Activated T-helper 1 cell treated with anti-CD3 and anti-CD28 coated beads, Interleukin-12 subunit alpha, Interleukin-12 subunit beta, Interleukin-2, Interleukin-4 antibody, amounts not matched to agents 30 ng/mL and 10 ng/mL and 1 ng/mL, durations not matched to agents 14 hours and 24 hours and 36 hours (primary cell): ENCODE measurements at regions of chr5 and their contacts with region 1.

Region 1: GRCh38 chr5:179732417-179732917 is at the start of gene MAML1:
- DNase-seq: peak; percentile 100
- H3K4me3 Mint-ChIP-seq: peak within 1 kb of the TSS; percentile 95
- H3K27ac Mint-ChIP-seq: peak within 1 kb of the TSS; percentile 93
- H3K4me1 Mint-ChIP-seq: peaks cover 26% of the 10 kb centered on the region
- H3K27me3 Mint-ChIP-seq: no peaks in the 10 kb centered on the region
- total RNA-seq, gene MAML1: 36.0 and 37.6 TPM in 2 replicates

Region 2: DNA sequence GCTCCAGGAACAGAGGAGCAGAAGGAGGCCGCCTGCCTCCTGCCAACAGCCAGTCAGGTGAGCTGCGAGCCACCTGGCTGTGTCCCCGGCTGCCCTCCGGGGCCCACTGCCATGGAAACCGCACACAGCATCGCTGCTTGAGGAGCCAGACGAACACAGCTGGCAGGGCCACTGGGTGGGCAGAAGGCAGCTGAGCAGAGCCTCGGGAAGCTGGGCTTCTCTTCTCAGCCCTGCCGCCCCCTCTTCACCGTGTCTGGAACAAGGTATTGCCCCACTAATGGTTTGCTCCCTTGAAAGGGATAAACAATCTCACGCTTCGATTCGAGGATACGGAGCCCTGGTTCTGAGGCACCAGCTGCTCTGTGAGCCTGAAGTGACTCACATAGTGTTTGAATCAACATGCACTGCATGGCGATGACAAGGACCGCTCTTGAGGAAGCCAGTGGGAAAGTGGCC is 245.8 kb before region 1 on chr5:
- intact Hi-C with region 1: no loop called
- DNase-seq: no peak
- H3K4me3 Mint-ChIP-seq: no peak overlapping the region
- H3K27ac Mint-ChIP-seq: no peak overlapping the region
- H3K4me1 Mint-ChIP-seq: no peaks in the 10 kb centered on the region
- H3K27me3 Mint-ChIP-seq: peaks cover 7% of the 10 kb centered on the region

Region 3: GRCh38 chr5:179516221-179516620 is 216.2 kb before region 1 on chr5:
- intact Hi-C with region 1: no loop called
- DNase-seq: no peak
- H3K4me3 Mint-ChIP-seq: no peak overlapping the region
- H3K27ac Mint-ChIP-seq: no peak overlapping the region
- H3K4me1 Mint-ChIP-seq: no peaks in the 10 kb centered on the region
- H3K27me3 Mint-ChIP-seq: peaks cover 4% of the 10 kb centered on the region

Region 4: GRCh38 chr5:179559284-179560252 is 172.9 kb before region 1 on chr5:
- intact Hi-C with region 1: loop called (anchors 1 kb)
- DNase-seq: peak; percentile 93
- H3K4me3 Mint-ChIP-seq: peak overlapping the region; percentile 94
- H3K27ac Mint-ChIP-seq: peak overlapping the region; percentile 86
- H3K4me1 Mint-ChIP-seq: peaks cover 10% of the 10 kb centered on the region
- H3K27me3 Mint-ChIP-seq: no peaks in the 10 kb centered on the region

Region 5: DNA sequence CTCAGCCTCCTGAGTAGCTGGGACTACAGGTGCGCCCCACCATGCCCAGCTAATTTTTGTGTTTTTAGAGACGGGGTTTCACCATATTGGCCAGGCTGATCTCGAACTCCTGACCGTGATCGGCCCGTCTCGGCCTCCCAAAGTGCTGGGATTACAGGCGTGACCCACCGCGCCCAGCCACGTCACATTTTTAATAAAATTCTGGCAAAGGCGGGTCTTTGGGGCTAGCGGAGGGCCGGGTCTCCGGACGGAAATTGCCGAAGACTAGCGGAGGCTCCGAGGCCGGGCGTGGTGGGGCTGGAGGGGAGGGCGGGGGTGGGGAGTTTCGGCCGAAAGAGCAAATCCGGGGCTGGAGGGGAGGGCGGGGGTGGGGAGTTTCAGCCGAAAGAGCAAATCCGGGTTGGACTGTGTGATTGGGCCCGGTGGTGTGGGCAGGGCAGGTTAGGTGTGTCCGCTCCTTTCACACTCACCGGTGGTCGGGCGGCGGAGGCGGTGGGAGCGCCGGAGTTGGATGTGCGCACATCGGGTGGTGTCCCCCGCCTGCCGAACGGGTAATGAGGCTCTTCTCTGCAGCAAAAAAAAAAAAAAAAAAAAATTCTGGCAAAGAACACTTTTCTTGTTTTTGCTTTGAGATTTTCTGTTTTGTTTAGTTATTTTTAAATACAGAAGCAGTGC is 155.0 kb before region 1 on chr5:
- intact Hi-C with region 1: no loop called
- DNase-seq: no peak
- H3K4me3 Mint-ChIP-seq: no peak overlapping the region
- H3K27ac Mint-ChIP-seq: no peak overlapping the region
- H3K4me1 Mint-ChIP-seq: no peaks in the 10 kb centered on the region
- H3K27me3 Mint-ChIP-seq: no peaks in the 10 kb centered on the region

Region 6: GRCh38 chr5:179697993-179698934 is 34.2 kb before region 1 on chr5:
- intact Hi-C with region 1: loop called (anchors 1 kb)
- DNase-seq: peak; percentile 99
- H3K4me3 Mint-ChIP-seq: peak overlapping the region; percentile 100
- H3K27ac Mint-ChIP-seq: peak overlapping the region; percentile 100
- H3K4me1 Mint-ChIP-seq: peaks cover 27% of the 10 kb centered on the region
- H3K27me3 Mint-ChIP-seq: no peaks in the 10 kb centered on the region

Region 7: DNA sequence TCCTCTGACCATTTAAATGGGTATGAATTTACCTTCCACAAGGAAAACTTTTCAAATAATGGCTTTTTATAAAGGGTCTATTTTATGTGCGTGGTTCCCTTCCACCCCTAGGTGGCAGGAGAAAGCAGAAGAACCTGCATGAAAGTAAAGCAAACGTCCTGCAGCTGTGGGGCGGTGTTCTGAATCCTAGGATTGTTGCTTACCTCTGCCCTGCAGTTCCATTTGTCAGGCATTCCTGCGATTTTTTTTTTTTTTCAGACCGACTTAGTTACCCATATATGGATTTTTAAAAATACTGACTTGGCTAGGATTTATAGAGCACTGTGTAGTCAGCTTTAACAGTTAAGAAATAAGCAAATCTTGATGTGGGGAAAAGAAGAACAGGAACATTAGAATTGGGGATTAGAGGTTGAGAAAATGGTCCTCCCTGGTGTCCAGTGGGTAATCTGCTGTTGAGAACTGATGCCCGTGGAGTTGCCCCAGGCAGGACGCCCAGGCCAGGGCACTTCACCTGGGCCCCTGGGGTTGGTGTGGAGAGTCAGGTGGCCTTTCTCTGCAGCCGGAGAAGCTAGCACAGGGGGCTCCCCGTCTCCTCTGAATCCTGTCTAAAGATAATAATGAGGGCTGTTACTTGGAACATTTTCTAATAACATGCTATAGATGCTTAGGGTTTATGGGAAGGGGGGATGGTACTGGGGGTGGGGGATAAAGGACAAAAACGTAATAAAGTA is 30.9 kb after region 1 on chr5:
- intact Hi-C with region 1: loop called (anchors 1 kb)
- DNase-seq: peak; percentile 11
- H3K4me3 Mint-ChIP-seq: no peak overlapping the region
- H3K27ac Mint-ChIP-seq: no peak overlapping the region
- H3K4me1 Mint-ChIP-seq: peaks cover 51% of the 10 kb centered on the region
- H3K27me3 Mint-ChIP-seq: no peaks in the 10 kb centered on the region

Region 8: GRCh38 chr5:179821581-179822432 is 89.3 kb after region 1 on chr5:
- intact Hi-C with region 1: loop called (anchors 1 kb)
- DNase-seq: peak; percentile 83
- H3K4me3 Mint-ChIP-seq: peak overlapping the region; percentile 95
- H3K27ac Mint-ChIP-seq: peak overlapping the region; percentile 97
- H3K4me1 Mint-ChIP-seq: peaks cover 48% of the 10 kb centered on the region
- H3K27me3 Mint-ChIP-seq: no peaks in the 10 kb centered on the region

Region 9: GRCh38 chr5:179914032-179914755 is 181.7 kb after region 1 on chr5:
- intact Hi-C with region 1: no loop called
- DNase-seq: no peak
- H3K4me3 Mint-ChIP-seq: no peak overlapping the region
- H3K27ac Mint-ChIP-seq: no peak overlapping the region
- H3K4me1 Mint-ChIP-seq: no peaks in the 10 kb centered on the region
- H3K27me3 Mint-ChIP-seq: peaks cover 2% of the 10 kb centered on the region